Breast epithelium (tissue), 4 donors: ENCODE measurements at regions of chr2 and their contacts with region 1.

Region 1: DNA sequence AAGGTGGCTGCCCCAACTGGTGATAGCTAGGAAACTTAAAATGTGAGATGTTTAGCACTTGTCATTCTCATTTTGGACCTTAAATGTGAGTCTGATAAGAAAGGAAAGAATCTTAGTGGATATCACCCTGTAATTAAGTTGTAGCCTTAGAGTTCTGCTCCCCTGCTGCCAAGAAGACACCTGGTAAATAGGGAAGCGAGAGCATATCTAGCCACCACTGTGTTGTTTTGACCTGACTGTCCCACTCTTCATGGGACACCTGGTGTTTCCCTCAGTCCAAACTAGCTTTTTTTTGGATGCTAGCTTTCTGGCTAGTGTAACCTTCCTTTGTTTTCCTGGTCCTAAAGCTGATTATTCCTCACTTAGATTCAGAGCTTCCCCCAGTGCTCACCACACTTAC is 357.6 kb downstream of the RAD51AP2 start:
- DNase-seq: no peak
- H3K4me3 ChIP-seq: no peak overlapping the region
- H3K27ac ChIP-seq: no peak overlapping the region
- H3K4me1 ChIP-seq: no peaks in the 10 kb centered on the region
- H3K27me3 ChIP-seq: no peaks in the 10 kb centered on the region
- CTCF ChIP-seq: no peak
- POLR2A ChIP-seq: no peak

Region 2: DNA sequence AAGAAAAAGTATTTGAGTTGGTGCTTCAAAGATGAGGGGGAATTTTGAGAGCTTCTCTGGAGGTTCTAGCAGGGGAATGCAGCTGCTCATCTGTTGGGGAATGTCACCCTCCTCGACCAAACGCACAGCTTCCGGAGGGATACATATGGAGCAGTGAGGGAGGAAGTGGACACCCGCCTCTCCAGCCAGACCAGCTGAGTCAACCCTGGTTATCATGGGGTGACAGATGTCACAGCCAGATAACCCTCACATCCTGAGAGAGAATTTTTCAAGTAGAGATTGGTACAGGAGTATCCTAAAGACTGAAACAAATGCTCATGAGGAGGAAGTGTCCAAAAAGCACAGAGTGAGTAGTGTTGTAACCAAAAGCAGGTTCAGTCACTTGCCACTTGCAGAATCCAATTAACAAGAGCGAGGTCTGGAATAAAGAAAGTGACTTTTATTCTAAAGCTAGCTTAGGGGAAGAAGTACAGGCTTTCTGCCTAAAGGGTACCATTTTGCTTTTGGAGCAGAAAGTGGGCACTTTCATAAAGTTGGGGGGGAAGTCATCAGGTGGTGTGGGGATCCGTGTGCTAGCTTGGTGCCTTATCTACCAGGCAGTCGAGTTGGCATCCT is 37.6 kb before region 1 on chr2:
- intact Hi-C with region 1: loop called (anchors 2 kb)
- DNase-seq: no peak
- H3K4me3 ChIP-seq: no peak overlapping the region
- H3K27ac ChIP-seq: no peak overlapping the region
- H3K4me1 ChIP-seq: no peaks in the 10 kb centered on the region
- H3K27me3 ChIP-seq: no peaks in the 10 kb centered on the region
- CTCF ChIP-seq: no peak
- POLR2A ChIP-seq: no peak

Region 3: GRCh38 chr2:17190527-17190926 is 29.9 kb after region 1 on chr2:
- intact Hi-C with region 1: no loop called
- DNase-seq: no peak
- H3K4me3 ChIP-seq: no peak overlapping the region
- H3K27ac ChIP-seq: no peak overlapping the region
- H3K4me1 ChIP-seq: no peaks in the 10 kb centered on the region
- H3K27me3 ChIP-seq: no peaks in the 10 kb centered on the region
- CTCF ChIP-seq: no peak
- POLR2A ChIP-seq: no peak